Transverse colon (tissue), 4 donors: ENCODE measurements at regions of chr17 and their contacts with region 1.

Region 1: DNA sequence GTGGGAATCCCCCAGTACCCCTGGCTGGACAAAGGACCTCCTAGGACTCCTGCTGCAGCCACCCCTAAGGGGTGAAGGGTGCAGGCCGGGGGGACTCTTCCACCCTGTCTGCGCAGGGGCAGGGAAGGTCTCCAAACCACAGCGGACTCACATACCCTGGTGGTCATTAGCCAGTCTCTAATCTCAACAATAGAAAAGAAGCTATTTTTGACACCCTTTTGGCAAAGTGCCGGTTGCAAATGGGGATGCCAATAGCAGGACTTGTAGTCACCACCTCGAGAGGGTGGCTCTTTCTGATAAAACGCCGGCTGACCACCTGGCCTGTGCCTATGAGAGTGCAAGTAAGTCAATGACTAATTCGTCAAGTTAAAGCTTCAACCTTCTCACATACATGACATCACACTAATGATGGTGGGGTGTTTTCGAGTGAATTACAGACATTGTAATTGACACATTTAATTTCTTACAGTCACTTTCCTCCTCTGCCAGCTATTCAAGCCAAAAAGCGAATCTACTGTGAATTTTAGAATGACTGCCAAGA is 23.1 kb upstream of the DNAH17 start:
- DNase-seq: no peak
- H3K4me3 ChIP-seq: no peak overlapping the region
- H3K27ac ChIP-seq: no peak overlapping the region
- H3K4me1 ChIP-seq: peaks cover 0 to 9% (median 1%) of the 10 kb centered on the region in 4 donors
- H3K27me3 ChIP-seq: no peaks in the 10 kb centered on the region
- CTCF ChIP-seq: no peak
- EP300 ChIP-seq: no peak
- POLR2A ChIP-seq: no peak

Region 2: DNA sequence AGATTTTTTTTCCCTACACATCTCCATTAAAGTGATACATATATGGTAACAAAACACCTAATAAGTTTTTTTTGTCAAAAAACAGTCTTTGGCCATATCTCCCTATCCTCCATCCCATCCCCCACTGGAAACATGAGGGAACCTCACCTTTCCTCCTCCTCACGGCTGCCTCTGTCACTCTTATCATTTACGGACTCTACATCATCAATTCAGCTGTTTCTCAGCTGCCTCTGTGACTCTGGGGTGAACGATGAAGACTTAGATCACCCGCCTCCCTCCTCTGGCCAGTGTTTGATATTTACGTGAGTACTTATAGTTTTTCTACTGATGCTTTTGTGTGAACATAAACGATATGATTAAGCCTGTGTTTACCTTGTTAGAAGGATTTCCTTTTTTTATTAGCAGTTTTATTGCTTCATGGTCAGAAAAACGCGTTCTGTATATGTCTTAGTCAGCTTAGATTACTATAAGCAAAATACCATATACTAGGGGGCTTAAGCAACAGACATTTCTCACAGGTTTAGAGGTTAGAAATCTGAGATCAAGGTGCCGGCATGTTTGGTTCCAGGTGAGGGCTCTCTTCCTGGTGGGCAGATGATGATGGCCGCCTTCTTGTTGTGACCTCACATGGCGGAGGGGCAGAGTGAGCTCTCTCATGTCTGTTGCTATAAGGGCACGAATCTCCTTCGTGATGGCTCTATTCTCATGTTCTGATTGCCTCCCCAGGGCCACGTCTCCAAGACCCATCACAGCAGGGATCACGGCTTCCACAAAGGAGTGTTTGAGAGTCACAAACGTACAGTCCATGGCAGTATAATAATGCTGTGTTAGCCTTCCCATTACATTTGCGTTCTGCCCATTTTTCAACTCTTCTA is 55.1 kb before region 1 on chr17:
- in situ Hi-C with region 1: no loop called
- intact Hi-C with region 1: loop called (anchors 2 kb)
- DNase-seq: no peak
- H3K4me3 ChIP-seq: no peak overlapping the region
- H3K27ac ChIP-seq: no peak overlapping the region
- H3K4me1 ChIP-seq: no peaks in the 10 kb centered on the region
- H3K27me3 ChIP-seq: no peaks in the 10 kb centered on the region
- CTCF ChIP-seq: no peak
- EP300 ChIP-seq: no peak
- POLR2A ChIP-seq: no peak

Region 3: GRCh38 chr17:78723001-78723796 is 122.9 kb after region 1 on chr17:
- in situ Hi-C with region 1: no loop called
- intact Hi-C with region 1: no loop called
- DNase-seq: peak; percentile 41
- H3K4me3 ChIP-seq: peak overlapping the region; percentile 8 to 46 (median 14)
- H3K27ac ChIP-seq: peak overlapping the region; percentile 47 to 84 (median 73)
- H3K4me1 ChIP-seq: peaks cover 47 to 86% (median 67%) of the 10 kb centered on the region in 4 donors
- H3K27me3 ChIP-seq: no peaks in the 10 kb centered on the region
- CTCF ChIP-seq: no peak
- EP300 ChIP-seq: no peak
- POLR2A ChIP-seq: no peak